HCT116 (cell line): ENCODE measurements at regions of chr17 and their contacts with region 1.

Region 1: DNA sequence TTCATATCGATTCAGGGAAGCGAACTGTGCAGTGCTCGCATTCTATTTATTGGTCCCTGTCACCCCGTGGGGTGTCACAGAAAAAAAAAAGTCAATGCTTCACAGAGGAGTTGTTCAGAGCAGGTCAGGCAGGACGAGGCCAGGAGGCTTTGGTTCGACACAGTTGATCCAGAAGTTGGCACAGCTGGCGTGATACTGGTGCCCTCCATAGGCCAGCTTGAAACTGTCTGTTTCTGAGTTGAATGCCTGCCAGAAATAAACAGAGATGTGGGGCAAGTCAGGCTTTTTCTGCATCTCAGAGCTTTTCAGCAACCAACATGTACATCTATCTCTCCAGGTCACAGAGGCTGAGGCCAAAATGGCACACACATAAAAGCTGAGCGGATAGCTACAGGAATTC is 29.1 kb downstream of the DUSP14 start:
- DNase-seq: no peak
- ATAC-seq: no peak
- H3K4me3 ChIP-seq: no peak overlapping the region
- H3K27ac ChIP-seq: no peak overlapping the region
- H3K4me1 ChIP-seq: no peaks in the 10 kb centered on the region
- H3K27me3 ChIP-seq: no peaks in the 10 kb centered on the region
- CTCF ChIP-seq: no peak
- POLR2A ChIP-seq: no peak
- RAD21 ChIP-seq: peak; percentile 19; the same call in 1 of the 2 replicates

Region 2: DNA sequence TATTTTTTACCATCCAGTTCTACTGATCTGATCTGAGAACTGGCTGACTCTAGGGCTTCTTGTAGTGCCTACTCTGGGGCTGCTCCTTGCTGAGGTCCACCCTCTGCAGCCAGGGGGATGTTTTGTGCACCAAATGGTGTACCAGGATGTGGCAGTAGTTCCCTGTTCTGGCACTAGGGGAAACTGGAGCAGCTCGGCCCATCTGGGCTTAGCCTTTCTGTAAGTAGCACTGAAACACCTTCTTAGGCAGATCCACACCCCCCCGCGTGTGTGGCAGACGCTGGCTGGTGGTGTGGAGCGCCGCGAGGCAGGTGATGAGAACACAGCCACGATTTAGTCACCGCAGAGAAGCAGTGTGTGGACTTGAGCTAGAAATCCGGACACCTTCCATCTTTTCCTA is 12.1 kb before region 1 on chr17:
- CTCF ChIA-PET with region 1: no interaction called
- POLR2A ChIA-PET with region 1: no interaction called
- RAD21 ChIA-PET with region 1: no interaction called
- intact Hi-C with region 1: loop called (anchors 1 kb)
- DNase-seq: peak; percentile 23
- ATAC-seq: peak; percentile 99
- H3K4me3 ChIP-seq: no peak overlapping the region
- H3K27ac ChIP-seq: no peak overlapping the region
- H3K4me1 ChIP-seq: peaks cover 0 to 3% of the 10 kb centered on the region in 2 experiments; a peak in 1 of 4 replicates
- H3K27me3 ChIP-seq: no peaks in the 10 kb centered on the region
- CTCF ChIP-seq: peak; percentile 39 to 82 (median 63); a peak in 5 of 6 replicates
- POLR2A ChIP-seq: no peak
- RAD21 ChIP-seq: 0 out of 2 replicates have a peak, but pooled peaks have one; percentile 21